HEK293 (cell line): ENCODE measurements at regions of chr11 and their contacts with region 1.

Region 1: GRCh38 chr11:122853971-122854446 is 15.7 kb downstream of the CRTAM start:
- H3K4me3 ChIP-seq: no peak overlapping the region
- H3K27ac ChIP-seq: no peak overlapping the region
- H3K4me1 ChIP-seq: 0 out of 2 replicates have a peak, but pooled peaks cover 3% of the 10 kb centered on the region
- CTCF ChIP-seq: peak; percentile 27; the same call in 1 of the 2 replicates

Region 2: GRCh38 chr11:122634497-122634896 is 219.5 kb before region 1 on chr11:
- CTCF ChIA-PET with region 1: interaction called, 37 read pairs
- POLR2A ChIA-PET with region 1: no interaction called
- H3K4me3 ChIP-seq: no peak overlapping the region
- H3K27ac ChIP-seq: no peak overlapping the region
- H3K4me1 ChIP-seq: no peaks in the 10 kb centered on the region
- CTCF ChIP-seq: no peak

Region 3: DNA sequence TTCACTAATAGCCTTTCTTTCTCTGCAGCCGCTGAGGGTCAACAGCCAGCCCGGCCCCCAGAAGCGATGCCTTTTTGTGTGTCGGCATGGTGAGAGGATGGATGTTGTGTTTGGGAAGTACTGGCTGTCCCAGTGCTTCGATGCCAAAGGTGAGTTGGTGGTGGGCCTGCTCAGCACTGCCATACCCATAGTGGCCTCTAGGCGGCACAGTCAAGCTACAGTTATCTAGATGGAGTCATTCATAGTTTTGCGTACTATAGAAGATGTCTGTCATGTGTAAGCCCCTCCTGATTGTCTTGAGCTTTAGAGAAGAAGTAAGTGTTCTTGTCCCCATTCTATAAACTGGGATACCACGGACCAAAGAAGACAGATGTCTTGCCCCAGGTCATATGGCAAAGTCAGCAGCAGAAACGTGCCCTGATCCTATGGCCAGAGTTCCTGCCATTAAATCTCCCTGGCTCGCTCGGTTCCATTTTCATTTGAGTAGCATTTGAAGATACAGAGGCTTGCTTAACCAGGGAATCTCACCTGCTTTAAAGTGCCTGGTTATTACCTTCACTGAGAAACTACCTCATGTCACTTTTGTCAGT is 57.8 kb before region 1 on chr11:
- CTCF ChIA-PET with region 1: interaction called, 131 read pairs
- POLR2A ChIA-PET with region 1: interaction called, 3 read pairs
- H3K4me3 ChIP-seq: no peak overlapping the region
- H3K27ac ChIP-seq: no peak overlapping the region
- H3K4me1 ChIP-seq: no peaks in the 10 kb centered on the region
- CTCF ChIP-seq: no peak

Region 4: DNA sequence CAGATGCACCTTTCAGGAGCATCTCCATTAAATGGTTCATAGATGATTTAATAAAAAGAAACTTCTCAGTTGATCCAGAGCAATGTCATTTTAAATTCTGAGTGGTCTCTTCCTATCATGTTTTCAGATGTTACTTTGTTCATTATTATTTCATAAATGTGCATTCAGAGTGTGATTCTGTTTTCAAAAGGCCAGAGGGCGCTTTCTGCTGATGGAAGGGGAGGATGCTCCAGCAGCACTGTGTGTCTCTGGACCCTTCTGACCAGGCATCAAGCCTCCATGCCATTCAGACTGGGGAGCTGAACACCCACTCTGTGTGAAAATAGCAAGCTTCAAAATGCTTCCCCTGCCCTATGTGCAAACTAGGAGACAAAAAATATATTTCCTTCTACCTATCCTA is 39.6 kb before region 1 on chr11:
- CTCF ChIA-PET with region 1: interaction called, 46 read pairs
- POLR2A ChIA-PET with region 1: no interaction called
- H3K4me3 ChIP-seq: no peak overlapping the region
- H3K27ac ChIP-seq: no peak overlapping the region
- H3K4me1 ChIP-seq: no peaks in the 10 kb centered on the region
- CTCF ChIP-seq: no peak

Region 5: GRCh38 chr11:122843281-122844141 is 10.5 kb before region 1 on chr11:
- CTCF ChIA-PET with region 1: interaction called, 15 read pairs
- POLR2A ChIA-PET with region 1: no interaction called
- H3K4me3 ChIP-seq: no peak overlapping the region
- H3K27ac ChIP-seq: no peak overlapping the region
- H3K4me1 ChIP-seq: no peaks in the 10 kb centered on the region
- CTCF ChIP-seq: no peak